Endothelial cell of umbilical vein (primary cell): ENCODE measurements at regions of chr18 and their contacts with region 1.

Region 1: DNA sequence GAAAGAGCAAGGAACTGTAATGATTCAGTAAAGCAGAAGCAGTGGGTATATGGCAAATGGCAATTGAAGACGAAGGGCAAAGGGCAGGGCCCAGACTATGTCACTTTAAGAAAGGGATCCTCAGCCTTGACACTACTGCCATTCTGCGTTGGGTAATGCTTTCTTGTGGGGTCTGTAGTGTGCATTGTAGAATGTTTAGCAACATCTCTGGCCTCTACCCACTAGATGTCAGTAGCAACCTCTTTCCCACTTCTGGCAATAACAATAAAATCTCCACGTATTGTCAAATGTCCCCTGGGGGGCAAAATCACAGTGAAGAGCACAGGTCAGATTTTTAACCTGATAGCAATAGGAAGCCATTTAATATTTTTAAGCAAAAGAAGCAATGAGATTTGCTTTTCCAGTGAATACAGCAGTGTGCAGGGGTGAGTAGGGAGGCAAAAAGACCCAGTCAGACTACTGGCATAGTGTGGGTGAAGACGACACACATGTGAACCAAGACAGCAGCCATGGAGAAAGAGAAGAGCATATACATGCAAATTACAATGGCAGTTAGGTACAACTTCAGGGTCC is 209.5 kb downstream of the DYM start:
- DNase-seq: peak; percentile 47
- H3K4me3 ChIP-seq: no peak overlapping the region
- H3K27ac ChIP-seq: no peak overlapping the region
- H3K4me1 ChIP-seq: peaks cover 38% of the 10 kb centered on the region
- H3K27me3 ChIP-seq: no peaks in the 10 kb centered on the region
- CTCF ChIP-seq: peak; percentile 32 to 52
- POLR2A ChIP-seq: no peak

Region 2: GRCh38 chr18:49447810-49448745 is 197.2 kb after region 1 on chr18:
- CTCF ChIA-PET with region 1: interaction called, 4 read pairs
- POLR2A ChIA-PET with region 1: no interaction called
- dilution Hi-C with region 1: no loop called
- intact Hi-C with region 1: loop called (anchors 1 kb)
- DNase-seq: peak; percentile 53
- H3K4me3 ChIP-seq: no peak overlapping the region
- H3K27ac ChIP-seq: no peak overlapping the region
- H3K4me1 ChIP-seq: no peaks in the 10 kb centered on the region
- H3K27me3 ChIP-seq: no peaks in the 10 kb centered on the region
- CTCF ChIP-seq: peak; percentile 68
- POLR2A ChIP-seq: no peak

Region 3: GRCh38 chr18:49612515-49613033 is 361.7 kb after region 1 on chr18:
- CTCF ChIA-PET with region 1: no interaction called
- POLR2A ChIA-PET with region 1: no interaction called
- dilution Hi-C with region 1: no loop called
- intact Hi-C with region 1: no loop called
- DNase-seq: no peak
- H3K4me3 ChIP-seq: no peak overlapping the region
- H3K27ac ChIP-seq: no peak overlapping the region
- H3K4me1 ChIP-seq: no peaks in the 10 kb centered on the region
- H3K27me3 ChIP-seq: peaks cover 0 to 2% of the 10 kb centered on the region in 2 experiments
- CTCF ChIP-seq: no peak
- POLR2A ChIP-seq: no peak